Cardiac septum (tissue), 1 donor: ENCODE measurements at regions of chr3 and their contacts with region 1.

Region 1: GRCh38 chr3:150408221-150409102 is at the start of gene TSC22D2:
- DNase-seq: peak; percentile 98
- total RNA-seq, gene TSC22D2: 66.0 TPM

Region 2: DNA sequence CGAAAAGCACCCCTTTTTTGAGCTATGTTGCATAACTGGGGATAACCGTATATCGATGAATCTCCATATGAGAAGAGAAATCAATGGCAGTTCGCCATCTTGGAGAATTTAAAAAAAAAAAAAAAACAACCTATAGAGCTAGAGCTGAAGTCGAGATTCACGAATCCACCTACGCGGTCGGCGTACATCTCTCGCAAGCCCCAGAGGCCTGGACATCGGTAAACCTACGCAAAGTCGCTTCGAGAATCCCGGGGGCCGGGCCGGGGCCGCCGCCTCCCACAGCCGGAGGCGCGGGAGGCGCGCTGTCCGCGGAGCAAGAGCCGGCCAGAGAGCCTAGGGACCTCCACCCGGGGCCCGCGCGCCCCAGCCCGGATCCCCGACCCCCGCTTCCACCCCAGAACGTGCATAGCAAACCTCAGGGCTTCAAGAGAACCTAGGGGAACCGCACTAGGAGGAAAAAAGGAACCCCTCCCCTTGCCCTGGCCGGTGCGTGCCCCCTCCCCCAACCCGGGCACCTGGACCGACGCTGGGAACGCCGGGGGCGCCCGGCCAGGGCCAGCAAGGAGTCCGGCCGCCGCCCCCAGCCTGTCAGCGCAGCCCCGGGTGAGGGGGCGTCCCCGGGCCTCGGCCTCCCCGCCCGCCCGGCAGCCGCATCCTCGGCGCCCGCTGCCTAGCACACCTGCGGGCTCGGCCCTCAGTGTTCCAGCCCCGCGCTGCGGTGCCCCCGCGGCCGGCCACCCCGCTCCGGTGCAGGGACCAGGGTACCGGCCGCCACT is 438.3 kb before region 1 on chr3:
- intact Hi-C with region 1: loop called (anchors 2 kb)
- DNase-seq: peak; percentile 88

Region 3: DNA sequence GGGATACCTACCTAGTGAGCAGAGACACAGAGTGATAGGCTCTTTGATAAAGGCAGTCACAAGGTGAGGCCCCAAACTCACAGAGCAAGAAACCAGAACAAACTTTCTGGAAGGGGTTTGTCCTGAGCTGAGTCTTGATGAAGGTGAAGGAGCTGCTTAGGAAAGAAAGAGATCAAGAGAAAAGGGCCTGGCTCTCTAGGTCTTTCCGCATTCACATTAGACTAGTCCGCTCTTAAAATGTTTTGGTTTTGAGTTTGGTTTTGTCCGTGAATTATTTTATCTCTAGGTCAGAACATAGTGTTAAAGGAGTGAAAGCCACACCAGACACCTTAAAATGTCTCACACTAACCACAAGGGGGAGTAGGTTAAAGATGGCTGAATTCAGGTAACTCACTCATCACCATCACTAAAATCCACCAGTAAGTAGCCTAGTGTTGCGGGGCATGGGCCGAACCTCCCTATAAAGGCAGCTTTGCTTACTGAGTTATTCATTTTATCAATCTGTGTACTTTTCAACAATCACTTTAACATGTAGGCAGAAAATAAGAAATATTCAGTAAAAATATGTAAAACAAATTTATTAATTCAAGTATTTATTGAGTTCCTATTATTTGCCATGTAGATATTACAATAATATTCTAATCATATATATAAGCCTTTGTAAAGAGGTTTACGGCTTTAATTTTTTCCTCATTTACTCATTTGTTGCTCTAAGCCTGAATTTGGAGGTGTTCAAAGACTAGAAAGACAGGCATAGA is 121.9 kb before region 1 on chr3:
- intact Hi-C with region 1: loop called (anchors 5 kb)
- DNase-seq: no peak

Region 4: GRCh38 chr3:150371741-150372254 is 36.7 kb before region 1 on chr3:
- intact Hi-C with region 1: loop called (anchors 2 kb)
- DNase-seq: no peak

Region 5: DNA sequence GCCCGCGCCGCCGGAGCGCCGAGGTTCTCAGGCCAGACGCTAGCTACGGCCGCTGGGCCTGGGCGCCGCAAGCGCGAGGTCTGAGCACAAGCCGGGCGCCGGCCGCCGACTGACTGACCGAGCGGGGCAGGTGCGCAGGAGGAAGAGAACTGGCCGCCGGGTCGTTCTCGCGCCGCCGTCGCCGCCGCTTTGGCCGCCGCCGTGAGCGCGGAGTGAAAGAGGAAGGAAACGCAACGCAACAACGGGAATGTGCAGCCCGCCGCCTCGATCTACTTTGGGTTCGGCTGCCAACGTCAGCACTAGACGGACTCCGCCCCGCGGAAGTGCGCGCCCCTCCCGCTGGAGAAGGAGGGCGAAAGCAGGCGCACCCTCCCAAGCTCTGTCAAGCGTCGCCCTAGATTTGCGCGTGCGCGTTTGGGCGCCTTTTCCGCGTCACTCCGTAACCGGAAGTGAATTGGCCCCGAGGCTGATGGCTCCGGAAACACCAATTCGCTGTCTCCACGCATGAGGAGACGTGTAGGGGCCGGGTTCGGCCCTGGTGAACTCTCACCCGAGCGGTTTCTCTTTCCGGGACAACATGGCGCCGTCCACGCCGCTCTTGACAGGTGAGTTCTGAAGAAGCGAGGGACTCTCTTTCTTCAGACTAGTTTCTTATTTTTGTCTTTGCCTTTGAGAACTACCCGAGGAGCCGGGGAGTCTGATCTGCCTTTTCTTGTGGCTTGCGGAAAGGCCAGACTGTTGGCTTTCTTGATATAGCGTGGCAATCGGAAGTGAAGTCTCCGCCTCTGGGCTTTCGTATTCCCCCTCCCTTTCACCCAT is 138.0 kb after region 1 on chr3 and contains the starts of genes EIF2A and SERP1:
- intact Hi-C with region 1: loop called (anchors 5 kb)
- DNase-seq: peak; percentile 100
- total RNA-seq, gene EIF2A: 65.4 TPM
- total RNA-seq, gene SERP1: 24.0 TPM